HepG2 (cell line): ENCODE measurements at regions of chr14 and their contacts with region 1.

Region 1: DNA sequence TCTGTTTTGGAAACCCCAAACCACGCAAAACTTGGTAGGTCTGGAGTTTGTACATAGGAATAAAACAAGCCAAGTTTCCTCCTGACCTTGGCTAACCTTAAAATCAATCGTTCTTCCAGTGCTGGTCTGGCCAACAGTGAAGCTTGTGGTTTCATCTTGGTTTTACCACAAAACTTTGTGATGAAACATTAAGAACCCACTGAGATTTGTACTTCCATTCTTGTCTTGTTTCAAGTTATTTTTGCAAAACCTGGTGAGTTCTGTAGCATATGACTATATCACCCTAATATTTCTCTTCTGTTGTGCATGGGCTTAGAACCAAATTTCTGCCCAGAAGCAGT is 26.4 kb downstream of the SIX1 start:
- DNase-seq: no peak
- ATAC-seq: no peak
- H3K4me3 ChIP-seq: no peak overlapping the region
- H3K27ac ChIP-seq: no peak overlapping the region
- H3K4me1 ChIP-seq: peaks cover 39% of the 10 kb centered on the region
- H3K27me3 ChIP-seq: no peaks in the 10 kb centered on the region; a peak in 1 of 5 replicates
- CTCF ChIP-seq: no peak
- EP300 ChIP-seq: no peak
- POLR2A ChIP-seq: no peak
- RAD21 ChIP-seq: no peak

Region 2: GRCh38 chr14:60648934-60649874 is 26.3 kb after region 1 on chr14 and contains the start of gene SIX1:
- CTCF ChIA-PET with region 1: no interaction called
- POLR2A ChIA-PET with region 1: no interaction called
- in situ Hi-C with region 1: no loop called
- intact Hi-C with region 1: loop called (anchors 1 kb)
- DNase-seq: peak; percentile 77
- ATAC-seq: peak; percentile 93
- H3K4me3 ChIP-seq: peak within 1 kb of the TSS; percentile 75 to 79 (median 77)
- H3K27ac ChIP-seq: peak within 1 kb of the TSS; percentile 44
- H3K4me1 ChIP-seq: peaks cover 55% of the 10 kb centered on the region
- H3K27me3 ChIP-seq: peaks cover 1 to 27% of the 10 kb centered on the region in 2 experiments; a peak in 4 of 5 replicates
- CTCF ChIP-seq: no peak
- EP300 ChIP-seq: no peak
- POLR2A ChIP-seq: peak; percentile 66 to 86
- RAD21 ChIP-seq: 0 out of 2 replicates have a peak, but pooled peaks have one; percentile 9
- total RNA-seq, gene SIX1: 6.5 and 6.8 TPM in 2 replicates

Region 3: GRCh38 chr14:61025251-61026223 is 402.6 kb after region 1 on chr14:
- CTCF ChIA-PET with region 1: interaction called, 24 read pairs
- POLR2A ChIA-PET with region 1: no interaction called
- in situ Hi-C with region 1: loop called (anchors 10 kb)
- intact Hi-C with region 1: loop called (anchors 1 kb)
- DNase-seq: peak; percentile 57
- ATAC-seq: peak; percentile 59; the same call in 2 of the 3 replicates
- H3K4me3 ChIP-seq: no peak overlapping the region
- H3K27ac ChIP-seq: no peak overlapping the region
- H3K4me1 ChIP-seq: peaks cover 10% of the 10 kb centered on the region; the same call in 1 of the 2 replicates
- H3K27me3 ChIP-seq: no peaks in the 10 kb centered on the region
- CTCF ChIP-seq: peak; percentile 80
- EP300 ChIP-seq: no peak
- POLR2A ChIP-seq: no peak
- RAD21 ChIP-seq: peak; percentile 61

Region 4: DNA sequence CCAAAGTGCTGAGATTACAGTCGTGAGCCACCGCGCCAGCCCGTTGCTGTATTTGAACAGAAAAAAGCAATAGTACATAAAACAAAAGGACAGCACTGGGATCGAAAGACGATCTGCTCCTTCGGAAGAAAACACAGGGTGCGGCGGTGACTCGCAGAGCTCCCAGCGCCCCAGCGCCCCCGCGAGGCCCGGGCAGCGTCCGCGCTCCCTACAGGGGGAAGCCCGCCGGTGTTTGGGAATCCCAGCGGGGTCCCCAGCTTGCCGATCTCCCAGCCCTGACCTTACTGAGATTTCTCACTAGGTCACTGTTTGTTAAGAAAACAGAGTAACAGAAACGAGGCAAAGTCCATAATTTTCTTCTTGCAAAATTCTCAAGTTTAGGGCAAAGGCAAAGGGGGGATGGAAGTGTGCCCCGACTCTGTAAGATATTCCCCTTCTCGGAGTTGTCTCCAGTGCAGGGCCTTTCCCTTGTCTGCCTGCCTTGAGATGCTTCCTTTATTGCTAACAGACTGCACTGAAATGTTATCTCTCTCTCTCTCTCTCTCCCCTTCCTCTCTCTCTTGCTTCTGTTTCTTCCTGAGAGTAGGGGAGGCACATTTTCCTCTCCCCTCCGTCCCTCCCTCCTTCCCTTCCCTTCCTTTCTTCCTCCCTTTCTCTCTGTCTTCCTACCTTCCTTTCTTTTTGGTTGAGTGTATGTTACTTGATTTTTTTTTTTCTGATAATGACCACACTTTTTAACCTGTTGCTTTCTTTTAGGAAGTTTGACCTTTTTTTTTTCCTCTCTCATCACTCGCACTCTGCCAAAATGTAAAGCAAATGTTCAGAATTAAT is 566.3 kb after region 1 on chr14:
- CTCF ChIA-PET with region 1: no interaction called
- POLR2A ChIA-PET with region 1: no interaction called
- in situ Hi-C with region 1: loop called (anchors 10 kb)
- intact Hi-C with region 1: loop called (anchors 2 kb)
- DNase-seq: peak; percentile 48
- ATAC-seq: peak; percentile 98
- H3K4me3 ChIP-seq: peak overlapping the region; percentile 49 to 72 (median 52); a peak in 5 of 6 replicates
- H3K27ac ChIP-seq: no peak overlapping the region
- H3K4me1 ChIP-seq: peaks cover 32% of the 10 kb centered on the region
- H3K27me3 ChIP-seq: peaks cover 0 to 4% of the 10 kb centered on the region in 2 experiments; a peak in 2 of 5 replicates
- CTCF ChIP-seq: peak; percentile 83
- EP300 ChIP-seq: no peak
- POLR2A ChIP-seq: no peak
- RAD21 ChIP-seq: peak; percentile 78

Region 5: DNA sequence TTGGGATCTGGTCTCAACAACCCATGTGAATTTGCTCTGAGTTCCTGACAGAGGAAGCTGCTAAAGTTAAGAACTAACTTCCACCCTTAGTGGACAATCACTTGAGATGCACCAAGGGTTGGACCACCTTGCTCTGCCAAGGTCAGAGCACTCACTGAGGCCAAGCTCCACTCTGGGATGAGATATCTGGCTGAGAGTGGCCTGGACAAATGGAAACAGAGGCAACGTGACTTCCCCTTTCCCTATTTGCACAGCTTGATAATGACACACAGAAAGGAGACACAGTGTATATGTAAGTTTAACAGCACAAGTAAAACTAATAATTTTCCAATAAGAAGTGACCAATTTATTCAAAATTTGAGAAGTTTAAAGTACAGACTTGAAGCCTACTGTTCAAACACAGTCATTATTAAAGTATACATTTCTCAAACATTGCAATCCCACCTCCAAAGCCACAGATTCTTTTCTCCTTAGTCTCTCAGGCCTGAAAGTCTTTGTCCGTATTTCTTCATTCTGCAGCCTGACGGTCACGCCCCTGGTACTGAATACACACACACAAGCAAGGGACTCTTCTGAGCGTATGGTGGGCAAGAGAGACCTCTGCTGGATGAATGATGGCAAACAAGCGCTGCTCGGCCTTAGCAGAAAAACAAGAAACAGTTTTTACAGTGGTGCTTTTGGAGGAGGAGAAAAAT is 629.6 kb after region 1 on chr14:
- CTCF ChIA-PET with region 1: interaction called, 21 read pairs
- POLR2A ChIA-PET with region 1: no interaction called
- in situ Hi-C with region 1: loop called (anchors 10 kb)
- intact Hi-C with region 1: loop called (anchors 1 kb)
- DNase-seq: peak; percentile 77
- ATAC-seq: peak; percentile 98
- H3K4me3 ChIP-seq: no peak overlapping the region
- H3K27ac ChIP-seq: no peak overlapping the region
- H3K4me1 ChIP-seq: peaks cover 11% of the 10 kb centered on the region
- H3K27me3 ChIP-seq: peaks cover 0 to 3% of the 10 kb centered on the region in 2 experiments; a peak in 3 of 5 replicates
- CTCF ChIP-seq: peak; percentile 91
- EP300 ChIP-seq: no peak
- POLR2A ChIP-seq: no peak
- RAD21 ChIP-seq: peak; percentile 86